Calu3 (cell line): ENCODE measurements at regions of chr15 and their contacts with region 1.

Region 1: GRCh38 chr15:35728176-35728938 is 182.4 kb upstream of the DPH6 start:
- DNase-seq: peak; percentile 1
- H3K4me3 Mint-ChIP-seq: peak overlapping the region; percentile 10
- H3K27ac Mint-ChIP-seq: peak overlapping the region; percentile 58
- H3K4me1 Mint-ChIP-seq: peaks cover 26% of the 10 kb centered on the region
- H3K27me3 Mint-ChIP-seq: no peaks in the 10 kb centered on the region
- CTCF ChIP-seq: no peak

Region 2: GRCh38 chr15:35624881-35625280 is 103.5 kb before region 1 on chr15:
- CTCF ChIA-PET with region 1: no interaction called
- intact Hi-C with region 1: no loop called
- DNase-seq: no peak
- H3K4me3 Mint-ChIP-seq: no peak overlapping the region
- H3K27ac Mint-ChIP-seq: no peak overlapping the region
- H3K4me1 Mint-ChIP-seq: peaks cover 1% of the 10 kb centered on the region
- H3K27me3 Mint-ChIP-seq: no peaks in the 10 kb centered on the region
- CTCF ChIP-seq: no peak

Region 3: GRCh38 chr15:35674873-35675781 is 53.2 kb before region 1 on chr15:
- CTCF ChIA-PET with region 1: no interaction called
- intact Hi-C with region 1: no loop called
- DNase-seq: no peak
- H3K4me3 Mint-ChIP-seq: no peak overlapping the region
- H3K27ac Mint-ChIP-seq: no peak overlapping the region
- H3K4me1 Mint-ChIP-seq: no peaks in the 10 kb centered on the region
- H3K27me3 Mint-ChIP-seq: no peaks in the 10 kb centered on the region
- CTCF ChIP-seq: no peak

Region 4: GRCh38 chr15:35740761-35741160 is 12.4 kb after region 1 on chr15:
- CTCF ChIA-PET with region 1: no interaction called
- intact Hi-C with region 1: no loop called
- DNase-seq: no peak
- H3K4me3 Mint-ChIP-seq: no peak overlapping the region
- H3K27ac Mint-ChIP-seq: no peak overlapping the region
- H3K4me1 Mint-ChIP-seq: peaks cover 7% of the 10 kb centered on the region
- H3K27me3 Mint-ChIP-seq: no peaks in the 10 kb centered on the region
- CTCF ChIP-seq: no peak

Region 5: GRCh38 chr15:35980719-35981118 is 252.4 kb after region 1 on chr15:
- CTCF ChIA-PET with region 1: no interaction called
- intact Hi-C with region 1: no loop called
- DNase-seq: no peak
- H3K4me3 Mint-ChIP-seq: no peak overlapping the region
- H3K27ac Mint-ChIP-seq: no peak overlapping the region
- H3K4me1 Mint-ChIP-seq: no peaks in the 10 kb centered on the region
- H3K27me3 Mint-ChIP-seq: no peaks in the 10 kb centered on the region
- CTCF ChIP-seq: no peak

Region 6: DNA sequence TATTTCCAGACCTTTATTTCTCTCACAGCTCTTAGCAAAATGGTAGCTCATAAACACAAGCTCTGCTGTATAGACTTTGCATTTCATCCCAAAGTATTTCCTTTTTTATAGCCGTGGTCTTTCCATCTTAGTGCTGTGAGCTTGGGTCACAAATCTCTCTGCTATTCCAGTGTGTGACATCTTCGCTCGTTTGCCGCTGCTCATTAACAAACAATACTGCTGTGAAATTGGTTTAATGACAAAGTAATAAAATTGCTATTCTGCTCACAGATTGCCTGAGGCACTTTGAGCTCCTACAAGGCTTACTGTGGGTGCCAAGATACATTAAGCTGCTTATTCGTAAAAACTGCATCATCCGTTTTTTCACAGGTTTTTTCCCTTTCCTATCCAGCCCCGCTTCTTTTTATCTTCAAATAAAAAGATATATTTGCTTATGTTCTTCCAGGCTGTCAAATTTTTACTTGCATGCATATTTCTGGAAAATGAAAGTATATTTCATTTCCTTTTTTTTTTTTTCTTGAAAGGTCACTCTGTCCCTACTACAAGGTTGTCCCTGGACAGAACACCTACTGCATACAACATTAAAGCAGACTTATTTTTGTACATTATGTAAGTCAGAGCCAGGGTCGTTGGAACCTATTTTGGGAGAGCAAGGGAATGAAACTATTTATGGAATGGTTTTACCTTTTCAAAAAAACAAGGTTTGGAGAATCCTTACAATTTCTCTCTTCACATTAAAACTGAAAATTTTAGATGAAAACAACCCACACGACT is 1197.5 kb after region 1 on chr15:
- CTCF ChIA-PET with region 1: no interaction called
- intact Hi-C with region 1: loop called (anchors 10 kb)
- DNase-seq: no peak
- H3K4me3 Mint-ChIP-seq: no peak overlapping the region
- H3K27ac Mint-ChIP-seq: no peak overlapping the region
- H3K4me1 Mint-ChIP-seq: no peaks in the 10 kb centered on the region
- H3K27me3 Mint-ChIP-seq: no peaks in the 10 kb centered on the region
- CTCF ChIP-seq: no peak